ENCODE measurements at regions of chr16 and their contacts with region 1.

Region 1: GRCh38 chr16:9123871-9124270 is 32.4 kb downstream of the HAPSTR1 start:
- DNase-seq: no peak
- H3K4me3 ChIP-seq: no peak overlapping the region
- CTCF ChIP-seq: no peak

Region 2: DNA sequence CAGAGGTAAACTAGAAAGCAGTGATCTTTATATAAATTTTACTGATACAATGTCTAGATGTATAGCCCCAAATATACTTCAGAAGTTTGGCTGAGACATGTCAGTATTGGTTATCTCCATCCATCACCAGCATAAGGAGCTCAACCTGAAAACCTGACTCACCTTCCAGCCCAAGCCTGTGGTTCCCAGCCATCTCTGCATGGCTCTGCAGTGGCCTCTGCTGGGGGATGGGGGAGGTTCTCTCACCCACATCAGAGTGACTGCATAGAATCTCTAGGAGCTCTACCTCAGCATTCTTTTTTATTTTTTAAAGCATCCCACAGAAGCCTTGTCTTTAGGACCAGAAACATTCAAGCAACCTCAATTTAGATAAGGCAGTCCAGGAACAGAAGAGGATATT is 187.4 kb before region 1 on chr16:
- in situ Hi-C with region 1: loop called (anchors 25 kb)
- DNase-seq: peak; percentile 37
- H3K4me3 ChIP-seq: no peak overlapping the region
- CTCF ChIP-seq: peak; percentile 88

Measured in astrocyte of the cerebellum (primary cell).